Right cardiac atrium (tissue), 5 donors: ENCODE measurements at regions of chr5 and their contacts with region 1.

Region 1: GRCh38 chr5:34474573-34475021 is 181.5 kb upstream of the RAI14 start:
- DNase-seq: no peak
- ATAC-seq: peak; percentile 68 to 72
- H3K4me3 ChIP-seq: no peak overlapping the region
- H3K27ac ChIP-seq: no peak overlapping the region
- H3K4me1 ChIP-seq: no peaks in the 10 kb centered on the region
- H3K27me3 ChIP-seq: no peaks in the 10 kb centered on the region

Region 2: GRCh38 chr5:34898258-34898895 is 423.8 kb after region 1 on chr5:
- intact Hi-C with region 1: loop called in 2 of 4 experiments (anchors 10 kb)
- DNase-seq: peak; percentile 51 to 80 (median 69)
- ATAC-seq: peak; percentile 85 to 86
- H3K4me3 ChIP-seq: no peak overlapping the region
- H3K27ac ChIP-seq: no peak overlapping the region
- H3K4me1 ChIP-seq: no peaks in the 10 kb centered on the region
- H3K27me3 ChIP-seq: no peaks in the 10 kb centered on the region

Region 3: GRCh38 chr5:35003018-35003957 is 528.7 kb after region 1 on chr5:
- intact Hi-C with region 1: loop called in 1 of 4 experiments (anchors 10 kb)
- DNase-seq: peak; percentile 44 to 74 (median 64)
- ATAC-seq: peak; percentile 51 to 55
- H3K4me3 ChIP-seq: no peak overlapping the region
- H3K27ac ChIP-seq: no peak overlapping the region
- H3K4me1 ChIP-seq: no peaks in the 10 kb centered on the region
- H3K27me3 ChIP-seq: no peaks in the 10 kb centered on the region